ENCODE measurements at regions of chr15 and their contacts with region 1.

Region 1: GRCh38 chr15:78709263-78709882 is 68.4 kb upstream of the CHRNB4 start:
- DNase-seq: peak; percentile 77
- ATAC-seq: peak; percentile 95

Region 2: GRCh38 chr15:78620021-78620526 is 89.3 kb before region 1 on chr15:
- intact Hi-C with region 1: loop called (anchors 5 kb)
- DNase-seq: no peak
- ATAC-seq: peak; percentile 6

Region 3: DNA sequence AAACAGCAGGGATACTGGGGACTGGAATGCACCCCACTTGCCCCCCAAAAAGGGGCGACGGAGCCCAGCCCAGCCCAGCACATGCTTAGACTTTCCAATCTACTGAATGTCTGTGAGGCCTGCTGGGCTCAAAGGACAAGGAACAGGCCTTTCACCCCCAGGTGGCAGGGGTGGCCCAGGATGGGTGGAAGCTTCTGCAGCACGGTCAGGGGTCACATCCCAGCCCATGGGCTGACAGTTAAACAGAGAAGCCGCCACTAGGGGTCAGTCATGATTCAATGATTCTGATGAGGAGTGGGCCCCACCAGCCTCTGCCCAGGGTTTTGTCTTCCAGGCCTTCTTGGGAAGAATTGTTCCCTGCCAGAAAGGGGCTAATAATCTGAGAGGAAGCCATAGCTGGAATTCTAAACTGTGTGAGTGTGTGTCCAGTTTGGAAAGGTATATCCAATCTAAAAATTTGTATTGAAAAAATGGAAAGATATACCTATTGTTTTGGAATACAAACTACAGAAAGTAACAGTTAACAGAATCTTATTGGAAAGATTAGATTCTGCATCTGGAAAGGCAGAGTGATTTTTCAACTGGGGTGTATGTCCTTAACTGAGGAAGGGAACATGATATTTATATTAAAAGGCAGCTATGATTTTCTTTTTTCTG is 70.6 kb before region 1 on chr15:
- intact Hi-C with region 1: loop called (anchors 5 kb)
- DNase-seq: no peak
- ATAC-seq: peak; percentile 75

Region 4: DNA sequence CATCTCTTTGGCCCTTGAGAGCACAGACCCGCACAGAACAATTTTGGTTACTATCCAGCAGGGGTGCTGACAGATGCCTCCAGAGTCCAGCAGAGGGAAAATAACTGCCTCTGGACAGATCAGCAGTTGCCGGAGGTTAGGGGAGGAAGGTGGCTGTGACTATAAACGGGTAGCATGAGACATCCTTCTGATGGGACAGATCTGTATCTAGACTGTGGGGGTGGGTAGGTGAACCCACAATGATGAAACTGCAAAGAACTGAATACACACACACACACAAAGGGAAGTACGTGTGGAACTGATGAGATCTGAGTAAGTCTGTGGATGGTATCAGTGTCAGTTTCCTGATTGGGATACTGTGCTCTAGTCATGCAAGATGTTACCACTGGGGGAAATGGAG is 80.7 kb after region 1 on chr15:
- intact Hi-C with region 1: no loop called
- DNase-seq: no peak
- ATAC-seq: peak; percentile 87

Measured in Right ventricle myocardium superior (tissue), 1 donor.